Activated CD4-positive, alpha-beta memory T cell treated with anti-CD3 and anti-CD28 coated beads for 36 hours (primary cell): ENCODE measurements at regions of chr4 and their contacts with region 1.

Region 1: GRCh38 chr4:121370729-121371325 is 10.0 kb downstream of the QRFPR start:
- DNase-seq: peak; percentile 43
- H3K4me3 Mint-ChIP-seq: no peak overlapping the region
- H3K27ac Mint-ChIP-seq: no peak overlapping the region
- H3K4me1 Mint-ChIP-seq: peaks cover 4% of the 10 kb centered on the region
- H3K27me3 Mint-ChIP-seq: peaks cover 11% of the 10 kb centered on the region

Region 2: GRCh38 chr4:121339307-121339706 is 31.5 kb before region 1 on chr4:
- CTCF ChIA-PET with region 1: no interaction called
- POLR2A ChIA-PET with region 1: no interaction called
- intact Hi-C with region 1: no loop called
- DNase-seq: no peak
- H3K4me3 Mint-ChIP-seq: no peak overlapping the region
- H3K27ac Mint-ChIP-seq: no peak overlapping the region
- H3K4me1 Mint-ChIP-seq: no peaks in the 10 kb centered on the region
- H3K27me3 Mint-ChIP-seq: peaks cover 6% of the 10 kb centered on the region

Region 3: GRCh38 chr4:121360495-121360894 is 10.3 kb before region 1 on chr4:
- CTCF ChIA-PET with region 1: interaction called, 10 read pairs
- POLR2A ChIA-PET with region 1: no interaction called
- intact Hi-C with region 1: no loop called
- DNase-seq: no peak
- H3K4me3 Mint-ChIP-seq: no peak overlapping the region
- H3K27ac Mint-ChIP-seq: no peak overlapping the region
- H3K4me1 Mint-ChIP-seq: peaks cover 5% of the 10 kb centered on the region
- H3K27me3 Mint-ChIP-seq: peaks cover 6% of the 10 kb centered on the region

Region 4: GRCh38 chr4:121380776-121381462 is 10.1 kb after region 1 on chr4 and contains the start of gene QRFPR:
- CTCF ChIA-PET with region 1: interaction called, 15 read pairs
- POLR2A ChIA-PET with region 1: no interaction called
- intact Hi-C with region 1: no loop called
- DNase-seq: peak; percentile 9
- H3K4me3 Mint-ChIP-seq: peak within 1 kb of the TSS; percentile 31
- H3K27ac Mint-ChIP-seq: no peak within 1 kb of the TSS
- H3K4me1 Mint-ChIP-seq: peaks cover 8% of the 10 kb centered on the region
- H3K27me3 Mint-ChIP-seq: peaks cover 54% of the 10 kb centered on the region
- total RNA-seq, gene QRFPR: not detected

Region 5: DNA sequence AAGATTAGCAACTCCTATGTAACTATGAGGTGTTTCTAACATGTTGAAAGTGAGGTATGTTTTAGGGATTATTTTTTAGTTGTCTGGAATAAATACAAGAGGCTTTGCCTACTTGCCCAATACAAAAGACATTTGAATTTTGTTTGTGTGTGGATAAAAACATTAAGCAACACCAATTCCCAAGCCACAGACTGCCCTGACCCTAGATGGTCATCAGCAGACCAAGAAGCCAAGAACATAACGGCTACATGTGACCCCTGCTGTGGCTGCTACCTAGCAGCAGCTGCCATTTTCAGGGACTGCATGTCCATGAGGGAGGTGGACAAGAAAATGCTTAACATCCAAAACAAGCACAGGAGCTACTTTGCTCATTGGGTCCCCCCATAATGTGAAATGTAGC is 80.5 kb after region 1 on chr4:
- CTCF ChIA-PET with region 1: no interaction called
- POLR2A ChIA-PET with region 1: no interaction called
- intact Hi-C with region 1: no loop called
- DNase-seq: no peak
- H3K4me3 Mint-ChIP-seq: no peak overlapping the region
- H3K27ac Mint-ChIP-seq: no peak overlapping the region
- H3K4me1 Mint-ChIP-seq: no peaks in the 10 kb centered on the region
- H3K27me3 Mint-ChIP-seq: peaks cover 15% of the 10 kb centered on the region

Region 6: DNA sequence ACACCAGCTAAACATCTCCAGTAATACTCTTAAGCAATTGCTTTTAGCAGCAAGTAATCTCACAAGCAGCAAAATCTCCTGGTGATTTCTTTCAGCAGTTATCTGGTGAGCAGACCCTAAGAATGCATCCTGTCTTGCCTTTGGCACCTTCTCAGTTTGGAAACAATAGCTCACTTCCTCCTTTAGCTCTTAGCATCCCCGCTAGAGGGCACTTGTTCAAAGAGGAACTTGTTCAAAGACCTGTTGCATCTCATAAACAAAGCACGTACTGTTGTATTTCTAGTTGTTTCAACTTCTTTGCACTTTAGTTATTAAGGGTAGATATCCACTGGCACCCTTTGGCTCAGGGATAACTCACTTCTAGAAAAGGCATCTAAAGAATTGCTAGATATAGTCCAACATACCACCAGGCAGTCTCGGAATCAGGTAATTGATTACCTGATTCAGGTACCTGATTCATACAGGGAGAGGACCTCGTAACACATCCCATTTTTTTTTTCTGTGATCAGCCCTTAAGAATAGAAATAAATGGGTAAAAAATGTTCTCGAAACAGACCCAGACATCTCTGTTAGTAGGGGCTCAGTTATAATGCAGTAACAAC is 91.9 kb after region 1 on chr4:
- CTCF ChIA-PET with region 1: interaction called, 5 read pairs
- POLR2A ChIA-PET with region 1: no interaction called
- intact Hi-C with region 1: loop called (anchors 5 kb)
- DNase-seq: peak; percentile 35
- H3K4me3 Mint-ChIP-seq: no peak overlapping the region
- H3K27ac Mint-ChIP-seq: no peak overlapping the region
- H3K4me1 Mint-ChIP-seq: no peaks in the 10 kb centered on the region
- H3K27me3 Mint-ChIP-seq: peaks cover 26% of the 10 kb centered on the region

Region 7: GRCh38 chr4:121554382-121554781 is 183.6 kb after region 1 on chr4:
- CTCF ChIA-PET with region 1: no interaction called
- POLR2A ChIA-PET with region 1: no interaction called
- intact Hi-C with region 1: no loop called
- DNase-seq: no peak
- H3K4me3 Mint-ChIP-seq: no peak overlapping the region
- H3K27ac Mint-ChIP-seq: no peak overlapping the region
- H3K4me1 Mint-ChIP-seq: no peaks in the 10 kb centered on the region
- H3K27me3 Mint-ChIP-seq: peaks cover 3% of the 10 kb centered on the region

Region 8: GRCh38 chr4:121656269-121656641 is 285.4 kb after region 1 on chr4:
- CTCF ChIA-PET with region 1: interaction called, 14 read pairs
- POLR2A ChIA-PET with region 1: no interaction called
- intact Hi-C with region 1: loop called (anchors 1 kb)
- DNase-seq: peak; percentile 42
- H3K4me3 Mint-ChIP-seq: no peak overlapping the region
- H3K27ac Mint-ChIP-seq: no peak overlapping the region
- H3K4me1 Mint-ChIP-seq: no peaks in the 10 kb centered on the region
- H3K27me3 Mint-ChIP-seq: no peaks in the 10 kb centered on the region

Region 9: DNA sequence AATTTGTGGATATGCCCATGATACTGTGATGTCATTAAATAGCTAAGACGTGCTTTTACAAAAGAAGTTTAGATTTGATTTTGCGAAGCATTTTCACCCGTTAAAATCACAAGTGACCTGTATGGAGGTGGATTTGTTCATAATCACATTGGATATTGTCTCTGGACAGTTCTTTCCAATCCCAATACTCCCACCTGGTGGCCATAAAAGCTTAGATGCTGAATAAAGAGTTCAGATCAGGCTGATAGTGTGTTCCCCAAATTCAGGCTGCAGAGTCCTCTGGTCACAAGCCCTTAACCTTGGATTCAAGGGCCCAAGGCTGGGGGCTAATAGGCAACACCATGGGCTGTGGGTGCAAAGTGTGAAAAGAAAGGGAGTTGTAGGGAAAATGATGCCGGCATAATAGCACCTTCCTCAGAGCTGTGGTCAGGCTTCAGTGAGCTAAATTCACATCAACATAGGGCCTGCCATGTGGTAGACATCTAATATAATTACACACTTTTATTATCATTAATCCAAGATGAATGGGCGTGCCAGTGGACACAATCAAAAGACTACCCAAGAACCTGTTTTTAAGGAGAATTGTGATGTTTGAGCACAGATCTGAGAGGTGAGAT is 366.0 kb after region 1 on chr4:
- CTCF ChIA-PET with region 1: interaction called, 5 read pairs
- POLR2A ChIA-PET with region 1: no interaction called
- intact Hi-C with region 1: loop called (anchors 1 kb)
- DNase-seq: no peak
- H3K4me3 Mint-ChIP-seq: no peak overlapping the region
- H3K27ac Mint-ChIP-seq: no peak overlapping the region
- H3K4me1 Mint-ChIP-seq: no peaks in the 10 kb centered on the region
- H3K27me3 Mint-ChIP-seq: peaks cover 1% of the 10 kb centered on the region

Region 10: DNA sequence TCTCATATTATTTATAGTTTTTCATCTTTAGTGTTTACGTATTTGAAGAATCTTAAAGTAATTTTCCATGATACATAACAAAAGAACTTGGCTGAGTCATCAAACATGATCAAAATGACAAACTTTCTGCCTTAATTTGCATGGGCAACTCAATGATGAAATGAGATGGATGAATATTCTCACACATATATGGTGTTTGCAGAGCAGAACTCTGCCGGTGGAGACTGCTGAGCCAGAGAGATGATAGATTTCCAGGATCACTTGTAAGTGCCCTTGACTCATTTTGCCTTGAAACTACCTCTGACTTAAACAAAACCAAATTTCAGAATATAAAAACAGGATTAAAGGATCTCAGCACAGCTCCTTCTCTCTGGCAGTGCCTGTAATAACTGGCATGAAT is 542.8 kb after region 1 on chr4:
- CTCF ChIA-PET with region 1: no interaction called
- POLR2A ChIA-PET with region 1: no interaction called
- intact Hi-C with region 1: no loop called
- DNase-seq: no peak
- H3K4me3 Mint-ChIP-seq: no peak overlapping the region
- H3K27ac Mint-ChIP-seq: no peak overlapping the region
- H3K4me1 Mint-ChIP-seq: no peaks in the 10 kb centered on the region
- H3K27me3 Mint-ChIP-seq: no peaks in the 10 kb centered on the region